Calu3 (cell line): ENCODE measurements at regions of chr1 and their contacts with region 1.

Region 1: GRCh38 chr1:113579256-113580018 is 179.8 kb downstream of the PHTF1 start:
- DNase-seq: no peak
- H3K4me3 Mint-ChIP-seq: no peak overlapping the region
- H3K27ac Mint-ChIP-seq: peak overlapping the region; percentile 27
- H3K4me1 Mint-ChIP-seq: peaks cover 46% of the 10 kb centered on the region
- H3K27me3 Mint-ChIP-seq: no peaks in the 10 kb centered on the region
- CTCF ChIP-seq: no peak

Region 2: GRCh38 chr1:113519556-113519955 is 59.9 kb before region 1 on chr1:
- CTCF ChIA-PET with region 1: no interaction called
- intact Hi-C with region 1: loop called (anchors 10 kb)
- DNase-seq: no peak
- H3K4me3 Mint-ChIP-seq: no peak overlapping the region
- H3K27ac Mint-ChIP-seq: no peak overlapping the region
- H3K4me1 Mint-ChIP-seq: peaks cover 9% of the 10 kb centered on the region
- H3K27me3 Mint-ChIP-seq: no peaks in the 10 kb centered on the region
- CTCF ChIP-seq: no peak

Region 3: DNA sequence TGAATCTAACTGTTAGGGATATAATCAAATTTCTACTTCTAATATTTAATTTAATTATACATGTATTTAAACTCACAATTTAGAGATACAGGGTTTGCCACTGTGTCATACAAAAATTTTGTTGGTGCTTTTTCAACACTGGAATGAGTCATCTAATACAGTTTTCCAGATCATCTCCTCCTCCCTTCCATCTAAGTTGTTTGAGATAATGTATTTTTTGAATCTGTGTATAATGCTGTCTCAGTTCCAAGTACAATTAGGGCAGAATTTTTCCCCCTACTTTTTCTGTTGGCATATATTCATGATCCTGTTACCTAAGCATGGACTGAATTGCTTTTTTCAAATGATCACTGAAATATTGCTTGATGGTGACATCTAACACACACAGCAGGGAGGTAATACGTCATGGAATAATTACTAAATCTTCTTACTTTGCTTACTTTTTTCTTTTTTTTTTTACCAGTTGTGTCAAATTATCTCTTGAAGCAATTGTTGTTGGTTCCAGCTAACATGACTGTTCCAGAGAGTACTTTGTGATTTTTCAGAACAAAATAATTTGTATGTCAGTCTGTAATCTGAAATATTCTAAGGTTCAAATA is 43.2 kb before region 1 on chr1:
- CTCF ChIA-PET with region 1: no interaction called
- intact Hi-C with region 1: loop called (anchors 5 kb)
- DNase-seq: no peak
- H3K4me3 Mint-ChIP-seq: no peak overlapping the region
- H3K27ac Mint-ChIP-seq: no peak overlapping the region
- H3K4me1 Mint-ChIP-seq: peaks cover 9% of the 10 kb centered on the region
- H3K27me3 Mint-ChIP-seq: no peaks in the 10 kb centered on the region
- CTCF ChIP-seq: no peak